Left lung (tissue), 14 donors: ENCODE measurements at regions of chr5 and their contacts with region 1.

Region 1: GRCh38 chr5:151164686-151165392 is 7.3 kb upstream of the ANXA6 start:
- DNase-seq: peak in 3 of 4 donors; percentile 67 to 85 (median 70)
- ATAC-seq: peak; percentile 99
- H3K4me3 ChIP-seq: no peak overlapping the region
- H3K27ac ChIP-seq: no peak overlapping the region
- H3K4me1 ChIP-seq: peaks cover 0 to 7% of the 10 kb centered on the region in 2 donors
- H3K27me3 ChIP-seq: no peaks in the 10 kb centered on the region
- CTCF ChIP-seq: peak; percentile 84 to 96

Region 2: GRCh38 chr5:151126199-151126645 is 38.6 kb before region 1 on chr5:
- intact Hi-C with region 1: loop called in 1 of 2 experiments (anchors 5 kb)
- DNase-seq: peak in 3 of 4 donors; percentile 61 to 95 (median 79)
- ATAC-seq: peak; percentile 79
- H3K4me3 ChIP-seq: no peak overlapping the region
- H3K27ac ChIP-seq: peak overlapping the region in 1 of 2 donors; percentile 74
- H3K4me1 ChIP-seq: peaks cover 0 to 34% of the 10 kb centered on the region in 2 donors
- H3K27me3 ChIP-seq: no peaks in the 10 kb centered on the region
- CTCF ChIP-seq: peak; percentile 60 to 86